Naive thymus-derived CD4-positive, alpha-beta T cell (primary cell): ENCODE measurements at regions of chr17 and their contacts with region 1.

Region 1: DNA sequence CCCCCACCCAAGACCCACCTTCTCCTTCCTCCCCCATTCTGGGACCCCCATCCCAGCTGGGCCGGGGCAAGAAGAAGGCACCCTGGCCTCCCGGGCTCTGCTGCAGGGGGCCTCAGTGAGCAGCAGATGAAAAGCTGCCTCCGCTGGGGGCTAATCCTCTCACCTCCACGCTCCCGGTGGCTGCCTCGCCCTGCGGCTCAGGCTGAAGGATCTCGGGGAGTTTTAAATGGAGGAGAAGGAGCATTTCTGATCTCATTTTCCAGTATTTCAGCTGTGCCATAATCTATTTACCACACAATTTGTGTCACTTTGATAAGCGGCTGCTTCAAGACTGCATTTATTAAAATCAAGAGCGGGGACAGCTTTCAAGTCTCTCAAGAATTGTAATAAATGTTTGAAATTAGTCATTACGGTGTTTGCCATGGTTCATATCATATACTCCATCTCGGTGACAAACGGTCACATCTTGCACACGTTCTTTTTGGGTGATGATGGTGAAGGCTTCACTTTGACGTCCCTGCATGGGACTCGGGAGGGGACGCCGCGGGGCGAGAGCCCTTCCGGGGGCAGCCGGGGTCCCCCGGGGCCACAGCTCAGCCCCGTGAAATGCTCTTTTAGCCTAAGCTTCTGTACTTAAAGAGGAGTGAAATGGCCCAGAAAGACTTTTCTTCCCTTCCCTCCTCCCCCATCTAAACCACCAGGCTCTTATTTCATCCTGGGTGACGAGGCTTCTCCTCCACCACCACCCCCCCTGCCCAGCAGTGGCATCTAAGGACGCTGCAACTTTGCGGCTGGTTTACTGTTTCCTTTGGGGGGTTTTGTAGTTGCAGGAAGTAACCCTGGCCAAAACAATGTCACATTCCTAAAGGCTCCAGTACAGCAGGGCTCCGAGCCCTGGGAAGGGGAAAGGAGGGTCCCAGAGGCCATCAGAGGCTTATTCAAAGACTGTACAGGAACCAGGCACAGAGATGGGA is 313.1 kb upstream of the TNRC6C start:
- DNase-seq: peak in 8 of 9 donors; percentile 45 to 74 (median 64)
- ATAC-seq: peak; percentile 84
- H3K4me3 ChIP-seq: peak overlapping the region; percentile 34
- H3K4me3 Mint-ChIP-seq: peak overlapping the region; percentile 63 to 81 (median 74)
- H3K27ac ChIP-seq: peak overlapping the region; percentile 55
- H3K27ac Mint-ChIP-seq: peak overlapping the region; percentile 84 to 94 (median 90)
- H3K4me1 ChIP-seq: peaks cover 13 to 21% of the 10 kb centered on the region in 2 donors
- H3K4me1 Mint-ChIP-seq: peaks cover 0 to 39% (median 31%) of the 10 kb centered on the region in 7 donors
- H3K27me3 ChIP-seq: no peaks in the 10 kb centered on the region
- H3K27me3 Mint-ChIP-seq: peaks cover 0 to 12% (median 0%) of the 10 kb centered on the region in 5 donors

Region 2: GRCh38 chr17:77594416-77595209 is 50.7 kb before region 1 on chr17:
- CTCF ChIA-PET with region 1: no interaction called
- POLR2A ChIA-PET with region 1: no interaction called
- intact Hi-C with region 1: no loop called
- DNase-seq: no peak
- ATAC-seq: no peak
- H3K4me3 ChIP-seq: no peak overlapping the region
- H3K4me3 Mint-ChIP-seq: peak overlapping the region in 2 of 10 donors; percentile 6 to 13
- H3K27ac ChIP-seq: no peak overlapping the region
- H3K27ac Mint-ChIP-seq: peak overlapping the region in 2 of 9 donors; percentile 22 to 35
- H3K4me1 ChIP-seq: no peaks in the 10 kb centered on the region
- H3K4me1 Mint-ChIP-seq: peaks cover 7 to 21% (median 8%) of the 10 kb centered on the region in 7 donors
- H3K27me3 ChIP-seq: no peaks in the 10 kb centered on the region
- H3K27me3 Mint-ChIP-seq: peaks cover 0 to 64% (median 4%) of the 10 kb centered on the region in 5 donors

Region 3: GRCh38 chr17:77609553-77610517 is 35.5 kb before region 1 on chr17:
- CTCF ChIA-PET with region 1: no interaction called
- POLR2A ChIA-PET with region 1: interaction called, 3 read pairs
- intact Hi-C with region 1: loop called (anchors 1 to 5 kb)
- DNase-seq: peak in 8 of 9 donors; percentile 30 to 86 (median 81)
- ATAC-seq: peak; percentile 95
- H3K4me3 ChIP-seq: peak overlapping the region; percentile 54
- H3K4me3 Mint-ChIP-seq: peak overlapping the region; percentile 75 to 92 (median 84)
- H3K27ac ChIP-seq: peak overlapping the region; percentile 77
- H3K27ac Mint-ChIP-seq: peak overlapping the region; percentile 87 to 98 (median 92)
- H3K4me1 ChIP-seq: peaks cover 11 to 21% of the 10 kb centered on the region in 2 donors
- H3K4me1 Mint-ChIP-seq: peaks cover 21 to 35% (median 31%) of the 10 kb centered on the region in 7 donors
- H3K27me3 ChIP-seq: no peaks in the 10 kb centered on the region
- H3K27me3 Mint-ChIP-seq: peaks cover 0 to 9% (median 0%) of the 10 kb centered on the region in 5 donors

Region 4: GRCh38 chr17:77741109-77741508 is 95.8 kb after region 1 on chr17:
- CTCF ChIA-PET with region 1: no interaction called
- POLR2A ChIA-PET with region 1: no interaction called
- intact Hi-C with region 1: loop called in 1 of 2 experiments (anchors 1 kb)
- DNase-seq: peak in 8 of 9 donors; percentile 10 to 58 (median 30)
- ATAC-seq: peak; percentile 45
- H3K4me3 ChIP-seq: no peak overlapping the region
- H3K4me3 Mint-ChIP-seq: no peak overlapping the region
- H3K27ac ChIP-seq: no peak overlapping the region
- H3K27ac Mint-ChIP-seq: peak overlapping the region in 1 of 9 donors; percentile 33
- H3K4me1 ChIP-seq: no peaks in the 10 kb centered on the region
- H3K4me1 Mint-ChIP-seq: peaks cover 0 to 3% (median 0%) of the 10 kb centered on the region in 7 donors
- H3K27me3 ChIP-seq: no peaks in the 10 kb centered on the region
- H3K27me3 Mint-ChIP-seq: peaks cover 0 to 11% (median 0%) of the 10 kb centered on the region in 5 donors

Region 5: DNA sequence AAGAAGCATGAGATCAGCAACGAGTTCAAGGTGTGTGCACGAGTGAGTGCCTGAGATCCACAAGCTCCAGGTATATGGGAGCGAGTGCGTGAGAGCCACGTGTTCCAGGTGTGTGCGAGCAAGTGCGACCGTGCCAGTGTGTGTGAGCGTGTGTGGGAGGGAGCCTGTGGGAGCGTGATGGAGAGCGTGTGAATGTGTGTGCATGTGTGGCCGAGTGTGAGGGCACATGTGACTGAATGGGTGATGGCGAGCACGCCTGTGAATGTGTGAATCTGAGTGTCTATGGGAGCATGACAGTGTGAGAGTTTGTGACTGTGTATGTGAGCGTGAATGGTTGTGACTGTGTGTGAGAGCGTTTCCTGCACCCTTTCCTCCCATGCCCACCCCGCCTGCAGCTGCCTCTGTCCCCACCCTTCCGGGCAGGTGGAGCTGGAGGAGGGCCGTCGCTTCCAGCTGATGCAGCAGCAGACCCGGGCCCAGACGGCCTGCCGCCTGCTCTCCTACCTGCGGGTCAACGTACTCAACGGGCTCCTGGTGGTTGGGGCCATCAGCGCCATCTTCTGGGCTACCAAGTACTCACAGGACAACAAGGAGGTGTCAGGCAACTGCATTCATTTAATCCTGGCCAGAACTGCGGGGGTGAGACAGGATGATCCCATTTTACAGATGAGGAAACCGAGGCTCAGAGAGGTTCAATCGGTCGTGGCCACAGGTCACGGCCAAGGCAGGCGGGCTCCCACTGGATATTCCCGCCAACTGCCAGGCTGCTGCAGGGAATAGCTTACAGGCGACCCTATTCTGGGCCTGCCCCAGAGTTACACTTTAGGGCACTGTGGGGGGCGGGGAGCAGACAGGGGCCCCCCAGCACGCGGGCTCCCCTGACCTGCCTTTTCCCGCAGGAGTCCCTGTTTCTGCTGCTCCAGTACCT is 488.9 kb after region 1 on chr17:
- CTCF ChIA-PET with region 1: no interaction called
- POLR2A ChIA-PET with region 1: no interaction called
- intact Hi-C with region 1: no loop called
- DNase-seq: peak in 8 of 9 donors; percentile 72 to 89 (median 84)
- ATAC-seq: peak; percentile 58
- H3K4me3 ChIP-seq: peak overlapping the region; percentile 95
- H3K4me3 Mint-ChIP-seq: peak overlapping the region; percentile 81 to 99 (median 92)
- H3K27ac ChIP-seq: peak overlapping the region; percentile 77
- H3K27ac Mint-ChIP-seq: peak overlapping the region; percentile 68 to 95 (median 87)
- H3K4me1 ChIP-seq: peaks cover 56 to 66% of the 10 kb centered on the region in 2 donors
- H3K4me1 Mint-ChIP-seq: peaks cover 55 to 73% (median 66%) of the 10 kb centered on the region in 7 donors
- H3K27me3 ChIP-seq: no peaks in the 10 kb centered on the region
- H3K27me3 Mint-ChIP-seq: peaks cover 0 to 3% (median 0%) of the 10 kb centered on the region in 5 donors